ENCODE measurements at regions of chr9 and their contacts with region 1.

Region 1: DNA sequence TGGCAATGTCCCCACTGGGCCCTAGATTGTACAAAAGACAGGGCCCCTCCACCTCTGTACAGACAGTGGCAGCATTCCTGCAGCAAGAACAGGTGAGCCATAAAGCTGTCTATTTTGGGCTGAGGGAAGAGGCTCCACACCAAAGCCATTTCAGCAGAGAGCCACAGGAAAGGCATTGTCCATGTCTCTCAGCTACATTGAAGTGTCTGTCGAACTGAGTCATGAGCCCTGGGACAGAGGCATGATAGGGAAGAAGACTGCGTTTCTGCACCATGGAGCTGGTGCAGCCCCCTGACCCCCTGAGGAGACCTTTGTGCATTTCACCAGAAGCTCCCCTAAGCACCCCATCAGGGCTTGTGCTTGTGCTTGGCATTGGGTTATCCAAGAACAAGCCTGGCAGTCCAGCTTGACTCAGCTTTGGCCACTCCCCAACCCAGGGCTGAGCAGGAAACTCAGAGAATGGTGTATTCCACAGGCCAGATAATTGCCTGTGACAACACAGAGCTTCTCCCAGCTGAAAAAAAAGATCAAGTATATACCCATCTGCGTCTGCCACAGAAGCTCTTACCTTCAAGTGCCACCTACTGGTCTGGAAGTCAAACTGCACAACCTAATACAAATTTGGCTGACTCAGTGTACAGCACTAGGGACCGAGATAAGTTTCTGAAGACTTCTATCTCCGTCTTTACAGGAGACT is 5.9 kb upstream of the FRMD3 start:
- DNase-seq: no peak
- H3K4me3 ChIP-seq: no peak overlapping the region
- H3K27ac ChIP-seq: no peak overlapping the region
- H3K4me1 ChIP-seq: no peaks in the 10 kb centered on the region
- H3K27me3 ChIP-seq: no peaks in the 10 kb centered on the region
- CTCF ChIP-seq: peak; percentile 20 to 72 (median 66)
- POLR2A ChIP-seq: no peak

Region 2: GRCh38 chr9:82504620-82505019 is 1039.5 kb before region 1 on chr9:
- intact Hi-C with region 1: no loop called
- DNase-seq: no peak
- H3K4me3 ChIP-seq: no peak overlapping the region
- H3K27ac ChIP-seq: no peak overlapping the region
- H3K4me1 ChIP-seq: no peaks in the 10 kb centered on the region
- H3K27me3 ChIP-seq: no peaks in the 10 kb centered on the region
- CTCF ChIP-seq: no peak
- POLR2A ChIP-seq: no peak

Region 3: GRCh38 chr9:83219152-83219923 is 324.8 kb before region 1 on chr9:
- intact Hi-C with region 1: loop called (anchors 5 kb)
- DNase-seq: peak; percentile 78
- H3K4me3 ChIP-seq: peak overlapping the region; percentile 46 to 47
- H3K27ac ChIP-seq: peak overlapping the region; percentile 70
- H3K4me1 ChIP-seq: no peaks in the 10 kb centered on the region
- H3K27me3 ChIP-seq: no peaks in the 10 kb centered on the region
- CTCF ChIP-seq: peak in 2 of 4 experiments; percentile 35 to 59
- POLR2A ChIP-seq: peak; percentile 28

Region 4: GRCh38 chr9:83334320-83334719 is 209.8 kb before region 1 on chr9:
- intact Hi-C with region 1: loop called (anchors 5 kb)
- DNase-seq: peak; percentile 60
- H3K4me3 ChIP-seq: no peak overlapping the region
- H3K27ac ChIP-seq: no peak overlapping the region
- H3K4me1 ChIP-seq: no peaks in the 10 kb centered on the region
- H3K27me3 ChIP-seq: no peaks in the 10 kb centered on the region
- CTCF ChIP-seq: peak; percentile 85 to 93 (median 88)
- POLR2A ChIP-seq: no peak